ENCODE measurements at regions of chr1 and their contacts with region 1.

Region 1: GRCh38 chr1:149962123-149962548 is 25.5 kb upstream of the MTMR11 start:
- DNase-seq: peak in 1 of 3 donors; percentile 79
- ATAC-seq: peak; percentile 98
- H3K4me3 ChIP-seq: no peak overlapping the region
- H3K4me1 ChIP-seq: no peaks in the 10 kb centered on the region
- CTCF ChIP-seq: peak; percentile 44

Region 2: DNA sequence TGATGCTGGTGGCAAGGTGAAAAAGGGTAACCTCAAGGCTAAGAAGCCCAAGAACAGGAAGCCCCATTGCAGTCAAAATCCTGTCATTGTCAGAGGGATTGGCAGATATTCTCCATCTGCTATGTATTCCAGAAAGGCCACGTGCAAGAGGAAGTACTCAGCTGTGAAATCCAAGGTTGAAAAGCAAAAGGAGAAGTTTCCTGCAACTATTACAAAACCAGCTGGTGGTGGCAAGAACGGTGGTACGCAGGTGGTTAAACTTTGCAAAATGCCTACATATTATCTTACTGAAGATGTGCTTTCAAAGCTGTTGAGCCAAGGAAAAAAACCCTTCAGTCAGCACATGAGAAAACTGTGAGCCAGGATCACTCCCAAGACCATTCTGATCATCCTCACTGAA is 91.8 kb after region 1 on chr1:
- intact Hi-C with region 1: loop called (anchors 1 to 5 kb)
- DNase-seq: no peak
- ATAC-seq: no peak
- H3K4me3 ChIP-seq: no peak overlapping the region
- H3K4me1 ChIP-seq: no peaks in the 10 kb centered on the region
- CTCF ChIP-seq: no peak

Region 3: DNA sequence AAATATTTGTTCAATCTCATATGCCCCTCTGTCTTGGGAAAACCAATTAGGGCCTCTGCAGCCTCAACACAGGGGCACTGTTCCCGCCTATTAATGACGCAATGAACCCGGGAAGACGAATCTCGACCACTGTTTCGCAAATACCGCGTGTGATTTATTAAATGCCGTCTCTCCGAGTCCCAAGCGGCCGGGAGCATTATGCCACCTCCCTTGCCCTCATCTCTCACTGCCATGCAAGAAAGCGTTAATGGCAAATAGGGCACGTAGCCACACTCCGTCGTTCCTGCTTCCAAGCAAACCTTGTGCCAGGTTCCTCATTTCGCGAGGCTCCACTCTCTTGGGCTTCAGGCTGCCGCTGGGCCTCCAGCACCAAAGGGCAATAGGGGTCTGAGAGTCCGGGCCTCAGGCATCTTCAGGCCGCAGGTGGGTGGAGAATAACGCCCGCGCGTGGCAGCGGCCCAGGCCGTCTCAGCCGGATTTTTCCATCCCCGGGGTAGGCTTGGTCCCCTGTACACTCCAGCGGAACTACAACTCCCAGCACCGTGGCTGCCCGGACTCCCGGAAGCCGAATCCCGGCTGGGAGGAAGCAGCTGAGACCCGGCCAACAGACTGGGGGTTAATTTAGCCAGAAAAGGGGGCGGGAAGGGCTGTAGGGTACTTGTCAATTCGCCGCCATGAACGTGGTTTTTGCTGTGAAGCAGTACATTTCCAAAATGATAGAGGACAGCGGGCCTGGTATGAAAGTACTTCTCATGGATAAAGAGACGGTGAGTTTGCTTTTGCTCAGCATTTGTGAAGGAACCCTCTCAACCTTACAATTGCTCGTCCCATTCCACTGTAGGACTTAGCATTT is 105.3 kb after region 1 on chr1 and contains the start of gene VPS45:
- intact Hi-C with region 1: no loop called
- DNase-seq: peak; percentile 91 to 93 (median 92)
- ATAC-seq: peak; percentile 99
- H3K4me3 ChIP-seq: peak within 1 kb of the TSS; percentile 40
- H3K4me1 ChIP-seq: peaks cover 6% of the 10 kb centered on the region
- CTCF ChIP-seq: no peak
- total RNA-seq, gene VPS45: 28.3 to 43.4 (median 33.6) TPM

Region 4: GRCh38 chr1:150162862-150163706 is 200.9 kb after region 1 on chr1:
- intact Hi-C with region 1: loop called in 1 of 2 experiments (anchors 10 kb)
- DNase-seq: peak; percentile 65 to 81 (median 81)
- ATAC-seq: peak; percentile 86
- H3K4me3 ChIP-seq: no peak overlapping the region
- H3K4me1 ChIP-seq: no peaks in the 10 kb centered on the region
- CTCF ChIP-seq: no peak

Region 5: GRCh38 chr1:150186789-150187559 is 224.8 kb after region 1 on chr1:
- intact Hi-C with region 1: loop called in 1 of 2 experiments (anchors 10 kb)
- DNase-seq: no peak
- ATAC-seq: peak; percentile 73
- H3K4me3 ChIP-seq: no peak overlapping the region
- H3K4me1 ChIP-seq: peaks cover 5% of the 10 kb centered on the region
- CTCF ChIP-seq: no peak